Ovary (tissue), 10 donors: ENCODE measurements at regions of chr18 and their contacts with region 1.

Region 1: GRCh38 chr18:28781616-28782362 is 604.9 kb upstream of the CDH2 start:
- DNase-seq: no peak
- H3K4me3 ChIP-seq: no peak overlapping the region
- H3K27ac ChIP-seq: no peak overlapping the region
- H3K4me1 ChIP-seq: no peaks in the 10 kb centered on the region
- H3K27me3 ChIP-seq: no peaks in the 10 kb centered on the region
- CTCF ChIP-seq: no peak
- EP300 ChIP-seq: no peak
- POLR2A ChIP-seq: no peak

Region 2: GRCh38 chr18:28855524-28855923 is 73.7 kb after region 1 on chr18:
- intact Hi-C with region 1: no loop called
- DNase-seq: no peak
- H3K4me3 ChIP-seq: no peak overlapping the region
- H3K27ac ChIP-seq: no peak overlapping the region
- H3K4me1 ChIP-seq: no peaks in the 10 kb centered on the region
- H3K27me3 ChIP-seq: no peaks in the 10 kb centered on the region
- CTCF ChIP-seq: no peak
- EP300 ChIP-seq: no peak
- POLR2A ChIP-seq: no peak

Region 3: DNA sequence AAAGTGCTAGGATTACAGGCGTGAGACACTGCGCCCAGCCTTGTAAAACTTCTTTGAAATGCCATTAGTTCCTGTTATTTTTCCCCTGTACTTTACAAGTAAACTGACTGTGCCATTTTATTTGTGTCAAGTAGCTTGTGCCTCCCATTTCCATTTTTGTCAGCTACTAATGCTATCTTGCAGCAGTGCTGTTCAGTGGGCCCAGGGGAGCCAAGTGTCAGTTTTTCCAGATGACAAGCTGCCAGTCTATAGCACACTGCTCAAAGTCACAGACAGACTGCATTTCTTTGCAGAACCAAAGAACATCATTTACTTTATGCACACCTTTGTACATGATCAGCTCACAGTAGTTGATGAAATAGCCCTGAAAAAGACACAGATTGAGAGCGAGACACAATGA is 296.5 kb after region 1 on chr18:
- intact Hi-C with region 1: no loop called
- DNase-seq: no peak
- H3K4me3 ChIP-seq: no peak overlapping the region
- H3K27ac ChIP-seq: no peak overlapping the region
- H3K4me1 ChIP-seq: no peaks in the 10 kb centered on the region
- H3K27me3 ChIP-seq: no peaks in the 10 kb centered on the region
- CTCF ChIP-seq: no peak
- EP300 ChIP-seq: no peak
- POLR2A ChIP-seq: no peak

Region 4: DNA sequence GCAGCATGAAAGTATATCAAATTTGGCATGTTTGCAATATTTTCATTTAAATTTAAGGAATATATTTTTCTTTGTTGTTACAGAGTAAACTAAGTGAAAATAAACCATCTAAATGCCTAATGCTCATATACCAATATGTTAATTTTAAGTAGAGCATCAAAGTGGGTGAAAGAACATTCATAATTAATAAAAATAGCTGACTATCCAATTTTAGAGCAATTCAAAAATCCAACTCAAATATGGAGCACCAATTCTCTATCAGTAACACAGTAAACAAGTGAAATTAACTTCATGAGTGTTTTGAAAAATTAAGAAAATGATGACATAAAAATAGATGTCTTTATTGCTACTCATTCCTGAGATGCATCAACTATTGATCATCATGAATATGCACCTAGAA is 1367.8 kb after region 1 on chr18:
- intact Hi-C with region 1: loop called in 1 of 4 experiments (anchors 5 kb)
- DNase-seq: no peak
- H3K4me3 ChIP-seq: no peak overlapping the region
- H3K27ac ChIP-seq: no peak overlapping the region
- H3K4me1 ChIP-seq: no peaks in the 10 kb centered on the region
- H3K27me3 ChIP-seq: no peaks in the 10 kb centered on the region
- CTCF ChIP-seq: no peak
- EP300 ChIP-seq: no peak
- POLR2A ChIP-seq: no peak